ENCODE measurements at regions of chr12 and their contacts with region 1.

Region 1: DNA sequence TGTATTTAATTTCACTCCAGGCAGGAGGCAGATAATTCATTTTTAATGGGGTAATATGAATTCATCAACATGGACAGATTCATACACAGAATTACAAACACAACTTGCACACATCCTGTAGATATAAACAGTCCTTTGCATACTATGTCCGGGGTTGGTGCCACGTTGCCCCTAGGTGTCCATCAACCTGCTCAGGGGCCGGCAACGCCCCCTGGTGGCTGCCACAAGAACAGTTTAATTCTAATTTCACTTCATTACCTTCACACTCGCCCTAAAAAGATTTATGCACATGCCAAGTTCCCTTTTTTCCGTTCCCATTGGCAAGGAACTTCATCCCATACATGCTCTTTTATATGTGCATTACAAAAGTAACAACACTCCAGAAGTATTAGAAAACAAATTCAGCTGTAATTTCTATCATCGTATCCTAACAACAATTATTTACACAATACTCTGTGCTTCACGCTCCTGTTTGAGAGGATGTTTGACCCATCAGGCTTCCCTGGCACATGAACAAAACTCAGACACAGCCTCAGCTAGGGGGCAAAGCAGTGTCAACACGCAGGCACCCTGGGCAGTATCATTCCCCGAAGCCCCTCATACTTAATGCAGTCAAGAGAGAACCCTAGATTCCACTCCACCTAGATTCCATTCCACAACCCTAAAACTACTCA is 15.5 kb downstream of the MANSC1 start:
- DNase-seq: peak in 1 of 2 experiments; percentile 57
- H3K4me3 ChIP-seq: no peak overlapping the region
- H3K27ac ChIP-seq: no peak overlapping the region
- H3K4me1 ChIP-seq: peaks cover 44% of the 10 kb centered on the region
- H3K27me3 ChIP-seq: no peaks in the 10 kb centered on the region
- CTCF ChIP-seq: peak; percentile 89

Region 2: DNA sequence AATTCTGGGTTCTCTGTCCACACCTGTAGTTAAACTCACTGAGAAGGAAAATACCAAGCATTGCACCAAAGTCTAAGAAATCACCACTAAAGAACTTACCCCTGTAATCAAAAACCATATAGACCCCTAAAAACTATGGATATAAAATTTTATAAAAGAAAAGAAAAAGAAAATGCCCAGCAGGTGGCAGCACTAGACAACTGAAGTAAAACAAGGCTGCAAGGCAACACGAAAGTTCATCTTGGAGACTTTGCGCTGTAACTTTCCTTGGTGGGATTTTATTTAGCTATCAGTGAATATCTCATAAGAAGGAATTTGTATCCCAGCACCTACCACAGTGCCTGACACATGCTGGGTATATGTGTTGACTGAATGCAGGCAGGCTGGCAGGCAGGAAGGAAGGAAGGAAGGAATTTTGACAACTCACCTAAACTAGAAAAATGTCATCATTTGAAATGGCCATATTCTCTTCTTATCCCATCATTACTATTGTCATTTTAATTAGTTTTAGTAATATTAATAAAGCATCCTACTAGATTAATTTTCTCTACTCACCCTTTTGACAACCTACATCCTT is 753.2 kb before region 1 on chr12:
- CTCF ChIA-PET with region 1: no interaction called
- POLR2A ChIA-PET with region 1: no interaction called
- intact Hi-C with region 1: loop called (anchors 1 kb)
- DNase-seq: peak; percentile 56 to 82
- H3K4me3 ChIP-seq: no peak overlapping the region
- H3K27ac ChIP-seq: peak overlapping the region; percentile 94
- H3K4me1 ChIP-seq: peaks cover 49% of the 10 kb centered on the region
- H3K27me3 ChIP-seq: no peaks in the 10 kb centered on the region
- CTCF ChIP-seq: peak; percentile 84

Region 3: GRCh38 chr12:12081836-12082497 is 252.5 kb before region 1 on chr12:
- CTCF ChIA-PET with region 1: interaction called, 4 read pairs
- POLR2A ChIA-PET with region 1: no interaction called
- intact Hi-C with region 1: loop called (anchors 1 kb)
- DNase-seq: peak; percentile 24 to 40
- H3K4me3 ChIP-seq: no peak overlapping the region
- H3K27ac ChIP-seq: no peak overlapping the region
- H3K4me1 ChIP-seq: no peaks in the 10 kb centered on the region
- H3K27me3 ChIP-seq: no peaks in the 10 kb centered on the region
- CTCF ChIP-seq: no peak; the same call in 1 of the 2 replicates

Region 4: DNA sequence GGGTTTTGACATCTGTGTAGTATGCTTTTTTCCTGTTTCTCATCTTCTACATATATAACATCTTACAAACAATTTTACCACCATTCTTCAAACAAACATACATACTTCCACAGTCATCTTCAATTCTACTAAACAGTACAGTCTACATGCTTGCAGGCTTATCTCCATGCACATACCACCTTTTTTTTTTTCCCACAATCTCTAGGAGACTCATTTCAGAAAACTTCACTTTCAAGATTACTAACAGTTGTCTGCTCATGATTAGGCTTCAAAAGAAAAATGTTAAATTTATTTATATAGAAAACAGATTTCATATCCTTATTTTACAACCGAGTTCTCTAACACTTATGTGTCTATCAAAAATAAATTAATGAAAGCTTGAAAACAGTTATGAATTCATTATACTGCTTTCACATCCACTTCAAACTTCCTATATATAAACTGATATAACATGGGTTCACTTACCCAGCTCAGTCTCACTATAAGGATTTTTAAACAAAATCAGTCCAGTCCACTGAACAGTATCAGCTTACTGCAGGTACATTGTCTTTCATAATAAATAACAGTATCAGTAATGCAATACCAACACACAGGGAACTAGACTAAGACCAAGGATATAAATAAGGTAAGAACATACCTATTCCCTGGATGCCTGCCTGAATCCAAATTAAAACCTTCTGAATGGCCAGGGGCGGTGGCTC is 110.1 kb before region 1 on chr12:
- CTCF ChIA-PET with region 1: no interaction called
- POLR2A ChIA-PET with region 1: no interaction called
- intact Hi-C with region 1: no loop called
- DNase-seq: no peak
- H3K4me3 ChIP-seq: no peak overlapping the region
- H3K27ac ChIP-seq: no peak overlapping the region
- H3K4me1 ChIP-seq: no peaks in the 10 kb centered on the region; the same call in 1 of the 2 replicates
- H3K27me3 ChIP-seq: no peaks in the 10 kb centered on the region
- CTCF ChIP-seq: no peak

Region 5: DNA sequence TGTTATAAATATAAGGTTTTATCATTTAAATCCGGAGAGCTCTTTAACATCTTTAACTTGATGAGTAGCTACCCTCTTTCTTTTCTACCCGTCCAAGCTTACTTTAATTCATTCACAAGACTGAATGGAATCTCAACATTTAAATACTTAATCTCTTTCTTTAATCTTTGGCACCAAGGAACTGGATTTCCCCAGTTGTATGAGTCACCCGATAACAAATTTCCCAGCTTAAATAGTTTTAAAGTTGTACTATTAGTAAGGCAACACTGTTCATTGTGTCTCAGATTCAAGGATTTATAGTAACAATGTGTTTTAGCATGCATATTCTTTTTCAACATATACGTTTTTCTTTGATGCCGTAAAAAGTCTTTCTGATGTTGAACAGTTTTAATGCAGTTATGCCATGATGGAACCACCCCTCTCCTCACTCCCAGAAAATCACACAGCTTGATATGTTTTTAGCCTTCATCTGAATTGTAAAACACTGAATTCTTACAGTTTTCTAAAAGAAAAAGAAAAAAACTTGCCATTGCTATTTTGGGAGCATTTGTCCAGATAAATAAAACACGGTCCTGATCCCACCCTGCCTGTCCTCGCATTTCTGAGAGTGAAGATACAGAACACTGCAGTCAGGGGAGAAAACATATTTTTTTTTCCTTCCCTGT is 51.6 kb before region 1 on chr12:
- CTCF ChIA-PET with region 1: no interaction called
- POLR2A ChIA-PET with region 1: no interaction called
- intact Hi-C with region 1: loop called (anchors 5 kb)
- DNase-seq: peak in 1 of 2 experiments; percentile 81
- H3K4me3 ChIP-seq: no peak overlapping the region
- H3K27ac ChIP-seq: 0 out of 2 replicates have a peak overlapping the region, but pooled peaks have one; percentile 25
- H3K4me1 ChIP-seq: peaks cover 14% of the 10 kb centered on the region
- H3K27me3 ChIP-seq: no peaks in the 10 kb centered on the region
- CTCF ChIP-seq: no peak

Region 6: DNA sequence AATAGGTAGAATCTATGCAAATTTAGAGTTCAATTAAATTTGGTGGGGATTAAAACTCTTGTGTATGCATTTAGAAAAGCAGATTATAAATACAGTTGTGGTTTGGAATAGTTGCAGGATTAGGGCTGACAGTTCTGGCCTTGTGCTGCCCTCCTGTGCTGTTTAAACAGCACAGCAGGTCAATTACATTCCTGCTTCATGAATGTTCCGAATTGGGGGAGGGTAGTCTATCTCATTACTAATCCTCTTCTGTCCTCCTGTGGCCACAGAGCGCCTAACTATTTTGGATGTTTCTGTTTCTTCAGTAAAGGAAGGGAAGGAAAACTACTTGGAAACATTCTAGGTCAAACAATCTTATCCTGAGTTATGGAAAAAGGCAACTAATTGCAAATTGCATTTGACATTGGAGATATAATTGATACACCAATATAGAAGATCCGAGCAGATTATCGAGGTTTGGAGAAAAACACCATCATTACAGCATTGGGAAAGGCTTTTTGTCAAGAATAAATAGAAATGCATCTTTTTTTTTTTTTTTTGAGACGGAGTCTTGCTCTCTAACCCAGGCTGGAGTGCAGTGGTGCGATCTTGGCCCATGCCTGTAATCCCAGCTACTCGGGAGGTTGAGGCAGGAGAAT is 370.2 kb after region 1 on chr12:
- CTCF ChIA-PET with region 1: no interaction called
- POLR2A ChIA-PET with region 1: no interaction called
- intact Hi-C with region 1: loop called (anchors 1 kb)
- DNase-seq: peak; percentile 65 to 83
- H3K4me3 ChIP-seq: no peak overlapping the region
- H3K27ac ChIP-seq: no peak overlapping the region
- H3K4me1 ChIP-seq: peaks cover 12% of the 10 kb centered on the region
- H3K27me3 ChIP-seq: no peaks in the 10 kb centered on the region
- CTCF ChIP-seq: peak; percentile 91

Measured in PC-9 (cell line).